HepG2 (cell line): ENCODE measurements at regions of chr2 and their contacts with region 1.

Region 1: GRCh38 chr2:159362816-159363251 is 76.3 kb upstream of the WDSUB1 start:
- DNase-seq: peak; percentile 12
- ATAC-seq: peak; percentile 89
- H3K4me3 ChIP-seq: no peak overlapping the region
- H3K27ac ChIP-seq: peak overlapping the region; percentile 12
- H3K4me1 ChIP-seq: peaks cover 16% of the 10 kb centered on the region
- H3K27me3 ChIP-seq: no peaks in the 10 kb centered on the region
- CTCF ChIP-seq: peak; percentile 28
- EP300 ChIP-seq: no peak
- POLR2A ChIP-seq: no peak
- RAD21 ChIP-seq: no peak

Region 2: GRCh38 chr2:159381574-159381973 is 18.7 kb after region 1 on chr2:
- CTCF ChIA-PET with region 1: no interaction called
- POLR2A ChIA-PET with region 1: no interaction called
- in situ Hi-C with region 1: no loop called
- intact Hi-C with region 1: loop called (anchors 2 kb)
- DNase-seq: peak; percentile 47
- ATAC-seq: peak; percentile 99
- H3K4me3 ChIP-seq: no peak overlapping the region; a peak in 1 of 6 replicates
- H3K27ac ChIP-seq: peak overlapping the region; percentile 53
- H3K4me1 ChIP-seq: peaks cover 29% of the 10 kb centered on the region
- H3K27me3 ChIP-seq: no peaks in the 10 kb centered on the region
- CTCF ChIP-seq: no peak
- EP300 ChIP-seq: no peak
- POLR2A ChIP-seq: no peak
- RAD21 ChIP-seq: no peak